ENCODE measurements at regions of chr2 and their contacts with region 1.

Region 1: DNA sequence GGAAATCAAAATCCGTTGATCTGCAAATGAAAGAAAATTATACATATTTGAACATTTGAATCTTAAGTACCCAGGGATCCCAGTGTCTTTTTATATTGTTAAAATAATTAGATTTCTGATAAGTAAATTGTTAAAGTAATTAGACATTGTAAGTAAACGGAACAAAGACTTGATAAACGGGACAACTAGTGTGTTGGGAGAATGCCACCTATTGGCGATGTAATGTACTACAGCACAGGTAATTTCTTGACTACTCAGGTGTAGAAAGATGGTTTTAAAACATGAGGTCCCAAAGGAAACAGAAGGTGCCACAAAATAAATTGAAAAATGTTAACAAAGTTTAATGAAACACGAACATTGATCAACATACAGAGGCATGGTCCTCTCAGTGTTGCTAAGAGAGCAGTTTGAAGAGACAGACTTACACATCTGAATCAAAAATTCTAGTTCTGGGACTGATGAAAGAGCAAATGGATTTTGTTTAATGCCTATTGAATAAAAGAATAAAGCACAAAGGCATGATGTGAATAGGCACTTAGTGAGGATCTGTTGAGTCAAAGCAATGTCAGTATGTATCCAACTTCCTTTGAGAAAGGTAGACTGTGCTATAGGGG is 103.4 kb upstream of the RASGRP3 start:
- DNase-seq: no peak
- ATAC-seq: no peak
- H3K4me3 ChIP-seq: no peak overlapping the region
- H3K27ac ChIP-seq: no peak overlapping the region
- H3K4me1 ChIP-seq: no peaks in the 10 kb centered on the region
- H3K27me3 ChIP-seq: no peaks in the 10 kb centered on the region
- CTCF ChIP-seq: peak; percentile 48 to 73 (median 61)
- POLR2A ChIP-seq: no peak

Region 2: GRCh38 chr2:33275689-33276444 is 97.2 kb before region 1 on chr2:
- in situ Hi-C with region 1: loop called in 1 of 4 experiments (anchors 10 kb)
- intact Hi-C with region 1: loop called (anchors 5 kb)
- DNase-seq: peak; percentile 52 to 53
- ATAC-seq: peak; percentile 58 to 60
- H3K4me3 ChIP-seq: no peak overlapping the region
- H3K27ac ChIP-seq: peak overlapping the region; percentile 63 to 76 (median 70)
- H3K4me1 ChIP-seq: peaks cover 0 to 15% of the 10 kb centered on the region in 2 donors
- H3K27me3 ChIP-seq: no peaks in the 10 kb centered on the region
- CTCF ChIP-seq: no peak
- POLR2A ChIP-seq: peak; percentile 11 to 24

Region 3: GRCh38 chr2:33284287-33284686 is 88.8 kb before region 1 on chr2:
- in situ Hi-C with region 1: loop called in 1 of 4 experiments (anchors 10 kb)
- intact Hi-C with region 1: loop called (anchors 5 kb)
- DNase-seq: no peak
- ATAC-seq: peak in 1 of 2 donors; percentile 49
- H3K4me3 ChIP-seq: no peak overlapping the region
- H3K27ac ChIP-seq: no peak overlapping the region
- H3K4me1 ChIP-seq: no peaks in the 10 kb centered on the region
- H3K27me3 ChIP-seq: no peaks in the 10 kb centered on the region
- CTCF ChIP-seq: no peak
- POLR2A ChIP-seq: no peak